Psoas muscle (tissue), 8 donors: ENCODE measurements at regions of chr2 and their contacts with region 1.

Region 1: DNA sequence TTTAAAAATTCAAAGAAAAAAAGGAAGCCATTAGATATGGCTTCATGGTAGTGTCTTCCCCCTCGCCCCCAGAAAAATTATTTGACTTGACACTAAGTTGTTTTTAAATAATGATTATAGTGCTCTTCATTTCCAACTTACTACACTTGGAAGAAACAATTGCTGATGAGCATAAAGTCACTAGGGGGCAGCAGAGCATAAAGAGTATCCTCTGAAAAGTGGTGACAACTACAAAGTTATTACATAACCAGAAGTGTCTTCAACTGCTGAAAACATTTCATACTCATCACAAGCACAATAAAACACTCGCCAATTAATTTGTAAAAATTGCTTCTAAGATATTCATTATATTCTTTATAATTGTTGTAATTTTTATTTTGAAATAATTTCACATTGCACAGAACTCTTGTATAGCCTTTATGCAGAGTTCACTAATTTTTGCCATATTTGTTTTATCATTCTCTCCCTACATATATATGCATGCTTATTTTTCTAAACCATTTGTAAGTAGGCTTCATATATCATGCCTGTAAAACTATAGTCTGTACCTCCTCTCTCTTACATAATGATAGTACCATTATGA is 54.9 kb downstream of the EXOC6B start:
- DNase-seq: no peak
- ATAC-seq: peak; percentile 62 to 88 (median 74)
- H3K4me3 ChIP-seq: no peak overlapping the region
- H3K27ac ChIP-seq: no peak overlapping the region
- H3K4me1 ChIP-seq: no peaks in the 10 kb centered on the region
- H3K27me3 ChIP-seq: no peaks in the 10 kb centered on the region
- CTCF ChIP-seq: peak; percentile 91

Region 2: DNA sequence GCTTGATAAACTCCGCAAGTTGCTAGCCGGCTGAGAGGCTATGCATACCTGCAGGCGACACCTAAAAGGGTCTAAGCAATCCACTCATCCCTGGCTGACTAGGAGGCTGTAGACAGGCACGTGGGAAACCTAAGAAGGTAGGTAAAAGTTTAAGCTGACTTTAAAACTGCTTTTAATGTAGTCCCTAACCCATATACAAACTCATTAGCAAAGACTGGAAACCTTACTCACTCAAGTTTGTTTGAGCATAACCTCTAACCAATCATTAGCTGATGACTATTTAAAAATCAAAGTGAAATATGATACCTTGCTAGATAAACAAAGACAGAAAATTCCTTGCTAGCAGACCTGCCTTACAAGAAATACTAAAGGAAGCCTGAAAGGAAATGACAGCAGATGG is 51.6 kb before region 1 on chr2:
- intact Hi-C with region 1: loop called in 1 of 2 experiments (anchors 2 kb)
- DNase-seq: no peak
- ATAC-seq: no peak
- H3K4me3 ChIP-seq: no peak overlapping the region
- H3K27ac ChIP-seq: no peak overlapping the region
- H3K4me1 ChIP-seq: no peaks in the 10 kb centered on the region
- H3K27me3 ChIP-seq: no peaks in the 10 kb centered on the region
- CTCF ChIP-seq: no peak

Region 3: DNA sequence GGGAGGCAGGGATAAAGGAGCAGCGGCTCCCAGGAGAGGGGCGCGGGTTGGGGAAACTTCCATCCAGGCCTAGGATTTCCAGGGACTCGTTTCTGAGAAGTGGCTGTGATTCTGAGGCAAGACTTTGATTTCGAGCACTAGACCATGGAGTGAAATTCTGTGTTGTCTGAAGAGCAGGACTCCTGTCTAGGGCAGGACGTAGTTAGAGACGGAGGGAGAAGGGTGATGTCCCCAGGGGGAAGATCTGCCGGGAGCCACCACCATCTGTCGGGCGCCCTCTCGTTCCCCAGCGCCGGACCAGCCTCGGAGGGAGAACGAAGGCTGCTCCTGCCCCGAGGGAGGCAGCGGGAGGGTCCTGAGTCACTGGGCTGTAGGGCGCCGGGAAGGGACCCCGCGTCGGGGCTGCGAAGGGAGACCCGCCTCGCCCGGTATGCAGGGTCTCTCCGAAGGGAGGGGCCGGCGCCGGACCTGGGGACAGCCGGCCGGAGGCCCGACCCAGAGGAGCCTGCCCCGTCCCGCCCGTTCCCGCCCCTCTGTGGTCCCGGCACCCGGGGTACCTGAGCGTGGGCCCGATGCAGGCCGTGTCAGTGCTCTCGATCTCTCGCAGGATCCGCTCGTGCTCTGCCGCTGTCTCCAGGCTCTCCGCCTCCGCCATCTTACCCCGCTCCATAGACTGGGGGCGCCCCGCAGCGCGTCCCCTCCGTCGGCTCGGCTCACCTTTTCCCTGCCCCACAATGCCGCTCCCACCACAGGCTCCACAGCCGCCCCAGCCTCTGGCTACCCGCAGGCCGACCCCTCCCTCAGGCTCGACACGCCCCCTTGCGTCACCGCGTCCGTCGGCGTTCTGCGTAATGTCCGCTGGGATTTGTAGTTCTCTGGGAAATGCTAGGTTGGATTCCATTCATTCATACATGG is 54.5 kb after region 1 on chr2 and contains the start of gene EXOC6B:
- intact Hi-C with region 1: loop called in 1 of 2 experiments (anchors 10 kb)
- DNase-seq: peak; percentile 92 to 95
- ATAC-seq: peak; percentile 94 to 99 (median 98)
- H3K4me3 ChIP-seq: peak within 1 kb of the TSS; percentile 94
- H3K27ac ChIP-seq: peak within 1 kb of the TSS; percentile 76
- H3K4me1 ChIP-seq: peaks cover 19% of the 10 kb centered on the region
- H3K27me3 ChIP-seq: no peaks in the 10 kb centered on the region
- CTCF ChIP-seq: no peak
- total RNA-seq, gene EXOC6B: 14.1 to 26.8 (median 20.4) TPM

Region 4: DNA sequence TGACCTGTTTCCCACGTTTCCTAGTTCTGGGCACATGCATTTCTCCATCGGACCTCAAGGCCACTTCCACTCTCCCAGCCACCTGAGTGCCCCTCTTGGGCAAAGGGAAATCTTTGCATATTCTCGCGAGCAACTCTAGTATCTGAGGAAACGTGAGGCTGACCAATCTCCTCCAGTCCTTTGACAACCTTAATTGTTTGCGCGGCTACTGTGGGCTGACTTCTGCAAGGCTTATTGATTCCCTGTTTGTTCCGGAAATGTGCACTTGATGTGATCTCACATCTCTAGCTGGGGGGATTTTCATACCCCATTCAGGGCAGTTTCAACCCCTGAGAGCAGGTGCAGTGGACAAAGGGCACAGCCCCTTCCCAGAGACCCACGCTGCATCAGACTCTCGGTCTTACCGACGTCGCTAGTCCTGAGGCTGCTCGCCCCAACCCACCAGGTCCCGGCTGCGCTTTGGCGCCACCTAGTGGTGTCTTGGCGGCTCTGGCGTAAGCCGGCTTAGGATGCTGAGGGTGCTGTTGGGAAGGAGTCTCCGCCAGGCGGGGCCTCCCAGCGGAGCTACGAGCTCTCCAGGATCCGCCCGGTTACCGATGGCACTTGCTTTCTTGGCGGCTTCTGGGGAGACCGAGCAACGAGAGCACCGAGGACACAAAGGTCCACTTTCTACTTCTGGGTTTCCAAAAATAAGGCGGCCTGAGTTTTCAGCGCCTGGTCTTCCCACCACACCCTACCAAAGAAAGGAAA is 91.4 kb after region 1 on chr2:
- intact Hi-C with region 1: loop called (anchors 1 to 2 kb)
- DNase-seq: peak; percentile 87 to 93
- ATAC-seq: peak; percentile 95 to 100 (median 98)
- H3K4me3 ChIP-seq: peak overlapping the region; percentile 47
- H3K27ac ChIP-seq: no peak overlapping the region
- H3K4me1 ChIP-seq: no peaks in the 10 kb centered on the region
- H3K27me3 ChIP-seq: peaks cover 0 to 16% (median 0%) of the 10 kb centered on the region in 3 donors
- CTCF ChIP-seq: peak; percentile 99

Region 5: GRCh38 chr2:73176881-73177644 is 406.1 kb after region 1 on chr2:
- intact Hi-C with region 1: loop called in 1 of 2 experiments (anchors 10 kb)
- DNase-seq: peak; percentile 93 to 95
- ATAC-seq: peak; percentile 94 to 99 (median 97)
- H3K4me3 ChIP-seq: peak overlapping the region; percentile 75
- H3K27ac ChIP-seq: peak overlapping the region; percentile 69
- H3K4me1 ChIP-seq: peaks cover 13% of the 10 kb centered on the region
- H3K27me3 ChIP-seq: peaks cover 0 to 46% (median 8%) of the 10 kb centered on the region in 3 donors
- CTCF ChIP-seq: peak; percentile 99